ENCODE measurements at regions of chr5 and their contacts with region 1.

Region 1: DNA sequence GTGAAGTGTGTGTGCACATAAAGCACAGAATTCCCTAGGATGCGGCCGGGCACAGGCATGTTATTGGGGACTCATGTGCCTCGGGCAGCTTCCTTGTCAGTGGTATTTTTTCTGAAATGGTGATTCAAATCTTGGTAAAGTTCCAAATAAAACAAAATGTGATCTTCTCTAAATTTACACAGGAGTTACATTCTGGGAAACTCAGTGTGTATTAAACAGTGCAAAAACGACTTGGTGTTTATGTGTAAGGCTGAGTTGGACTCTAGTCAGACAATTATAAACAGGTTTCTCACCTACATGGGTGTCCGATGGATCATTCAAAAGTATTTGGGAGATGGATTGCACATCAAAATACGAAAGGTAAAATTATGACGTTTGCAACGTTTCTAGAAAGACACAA is 48.9 kb downstream of the BOD1 start:
- DNase-seq: no peak
- ATAC-seq: no peak
- H3K4me3 ChIP-seq: no peak overlapping the region
- H3K27ac ChIP-seq: no peak overlapping the region
- H3K4me1 ChIP-seq: no peaks in the 10 kb centered on the region
- H3K27me3 ChIP-seq: peaks cover 23 to 59% of the 10 kb centered on the region in 2 experiments; a peak in 4 of 5 replicates
- CTCF ChIP-seq: no peak
- EP300 ChIP-seq: no peak
- POLR2A ChIP-seq: no peak
- RAD21 ChIP-seq: no peak

Region 2: GRCh38 chr5:172958331-172959046 is 609.1 kb before region 1 on chr5:
- CTCF ChIA-PET with region 1: no interaction called
- POLR2A ChIA-PET with region 1: no interaction called
- in situ Hi-C with region 1: no loop called
- intact Hi-C with region 1: no loop called
- DNase-seq: peak; percentile 80 to 97 (median 96)
- ATAC-seq: peak; percentile 92
- H3K4me3 ChIP-seq: peak overlapping the region; percentile 91
- H3K27ac ChIP-seq: peak overlapping the region; percentile 92
- H3K4me1 ChIP-seq: peaks cover 7 to 8% of the 10 kb centered on the region in 2 experiments; a peak in 4 of 5 replicates
- H3K27me3 ChIP-seq: 0 out of 5 replicates have a peak, but pooled peaks cover 0 to 2% of the 10 kb centered on the region in 2 experiments
- CTCF ChIP-seq: no peak
- EP300 ChIP-seq: no peak
- POLR2A ChIP-seq: no peak; the same call in 1 of the 2 replicates
- RAD21 ChIP-seq: no peak

Region 3: GRCh38 chr5:173293817-173294672 is 273.5 kb before region 1 on chr5:
- CTCF ChIA-PET with region 1: no interaction called
- POLR2A ChIA-PET with region 1: no interaction called
- in situ Hi-C with region 1: loop called (anchors 5 kb)
- intact Hi-C with region 1: loop called (anchors 5 kb)
- DNase-seq: peak; percentile 67 to 83 (median 72)
- ATAC-seq: peak; percentile 90
- H3K4me3 ChIP-seq: no peak overlapping the region; the same call in 1 of the 2 replicates
- H3K27ac ChIP-seq: no peak overlapping the region
- H3K4me1 ChIP-seq: peaks cover 11 to 19% of the 10 kb centered on the region in 2 experiments
- H3K27me3 ChIP-seq: peaks cover 17 to 34% of the 10 kb centered on the region in 2 experiments
- CTCF ChIP-seq: peak; percentile 91 to 94 (median 92)
- EP300 ChIP-seq: 0 out of 2 replicates have a peak, but pooled peaks have one; percentile 12
- POLR2A ChIP-seq: no peak
- RAD21 ChIP-seq: peak; percentile 97 to 98

Region 4: GRCh38 chr5:173653822-173654495 is 86.4 kb after region 1 on chr5:
- CTCF ChIA-PET with region 1: no interaction called
- POLR2A ChIA-PET with region 1: no interaction called
- in situ Hi-C with region 1: no loop called
- intact Hi-C with region 1: no loop called
- DNase-seq: no peak
- ATAC-seq: no peak
- H3K4me3 ChIP-seq: no peak overlapping the region
- H3K27ac ChIP-seq: no peak overlapping the region
- H3K4me1 ChIP-seq: 0 out of 5 replicates have a peak, but pooled peaks cover 0 to under 1% of the 10 kb centered on the region in 2 experiments
- H3K27me3 ChIP-seq: no peaks in the 10 kb centered on the region
- CTCF ChIP-seq: no peak
- EP300 ChIP-seq: no peak
- POLR2A ChIP-seq: no peak
- RAD21 ChIP-seq: no peak

Region 5: DNA sequence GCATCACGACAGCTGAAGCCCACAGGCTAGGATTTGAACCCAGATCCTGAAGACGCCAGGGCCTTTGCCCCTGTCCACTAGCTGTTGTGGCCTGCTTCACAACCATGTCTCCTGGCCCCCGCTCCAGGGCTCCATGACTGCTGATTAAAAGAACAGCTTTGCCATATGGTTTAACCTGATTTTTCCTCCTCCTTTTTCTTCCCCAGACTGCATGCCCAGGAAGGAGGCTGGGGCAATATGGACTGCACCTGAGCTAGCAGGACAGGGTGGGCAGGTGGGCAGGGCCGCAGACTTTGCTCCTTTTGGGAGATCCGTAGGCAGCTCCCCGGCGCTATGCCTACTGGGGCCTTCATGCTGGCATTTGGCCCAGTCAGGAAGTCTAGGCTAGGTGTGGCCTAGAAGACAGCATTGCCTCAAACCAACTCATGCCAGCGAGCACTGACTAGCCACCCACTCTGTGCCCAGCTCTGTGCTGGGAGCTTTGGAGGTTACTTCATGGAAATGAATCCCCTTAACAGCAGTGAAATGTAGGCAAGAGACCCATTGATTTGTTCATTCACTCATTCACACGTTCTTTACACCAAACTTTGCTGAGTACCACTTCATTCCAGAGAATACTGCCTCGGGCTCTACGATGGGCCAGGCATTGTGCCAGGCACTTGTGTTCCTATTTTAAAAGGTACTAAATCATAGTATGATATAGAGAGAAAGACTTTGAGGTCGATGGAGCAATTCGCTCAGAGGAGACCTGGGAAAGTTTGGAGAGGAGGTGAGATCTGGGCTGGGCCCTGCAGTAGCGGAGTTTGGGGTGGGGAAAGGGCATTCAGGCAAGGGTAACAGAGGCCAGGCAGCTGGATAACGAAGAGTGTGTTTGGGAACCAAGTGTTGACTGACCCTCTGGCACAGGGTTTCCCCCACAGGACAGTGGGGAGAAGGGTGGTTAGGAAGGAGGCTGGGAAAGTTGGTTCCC is 226.4 kb after region 1 on chr5:
- CTCF ChIA-PET with region 1: no interaction called
- POLR2A ChIA-PET with region 1: no interaction called
- in situ Hi-C with region 1: no loop called
- intact Hi-C with region 1: no loop called
- DNase-seq: no peak
- ATAC-seq: no peak
- H3K4me3 ChIP-seq: no peak overlapping the region
- H3K27ac ChIP-seq: no peak overlapping the region
- H3K4me1 ChIP-seq: peaks cover 12% of the 10 kb centered on the region in 2 experiments; a peak in 4 of 5 replicates
- H3K27me3 ChIP-seq: no peaks in the 10 kb centered on the region
- CTCF ChIP-seq: no peak
- EP300 ChIP-seq: no peak
- POLR2A ChIP-seq: no peak
- RAD21 ChIP-seq: no peak

Measured in K562 (cell line).